CD8-positive, alpha-beta T cell (primary cell): ENCODE measurements at regions of chr6 and their contacts with region 1.

Region 1: DNA sequence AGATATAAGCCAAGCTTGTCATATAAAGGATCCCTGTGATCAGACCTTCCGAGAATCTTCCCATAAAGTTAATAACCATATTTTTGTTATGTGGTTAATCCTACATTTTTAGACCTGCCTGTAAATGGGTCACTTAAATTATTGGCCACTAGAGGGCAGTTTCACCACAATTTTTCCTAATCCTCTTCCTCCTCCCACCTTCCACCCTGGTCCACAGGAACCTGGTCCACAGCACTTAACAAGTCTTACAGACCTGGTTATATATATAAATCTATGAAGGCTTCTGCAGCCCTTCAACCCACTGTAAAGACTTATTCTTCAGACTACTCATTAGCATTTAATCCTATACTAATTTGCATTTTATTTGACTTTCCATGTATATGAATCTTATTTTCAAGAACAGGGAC is 28.3 kb downstream of the MRS2 start:
- DNase-seq: peak in 3 of 9 experiments; percentile 17 to 62 (median 52)
- ATAC-seq: no peak
- H3K4me3 ChIP-seq: no peak overlapping the region
- H3K4me3 Mint-ChIP-seq: no peak overlapping the region
- H3K27ac ChIP-seq: no peak overlapping the region
- H3K27ac Mint-ChIP-seq: no peak overlapping the region
- H3K4me1 ChIP-seq: no peaks in the 10 kb centered on the region
- H3K4me1 Mint-ChIP-seq: no peaks in the 10 kb centered on the region
- H3K27me3 ChIP-seq: no peaks in the 10 kb centered on the region
- H3K27me3 Mint-ChIP-seq: no peaks in the 10 kb centered on the region
- CTCF ChIP-seq: peak; percentile 64

Region 2: GRCh38 chr6:24520929-24521546 is 90.0 kb after region 1 on chr6:
- CTCF ChIA-PET with region 1: interaction called, 16 read pairs
- POLR2A ChIA-PET with region 1: no interaction called
- intact Hi-C with region 1: loop called (anchors 1 to 5 kb)
- DNase-seq: peak in 7 of 9 experiments; percentile 2 to 43 (median 26)
- ATAC-seq: peak; percentile 56
- H3K4me3 ChIP-seq: no peak overlapping the region
- H3K4me3 Mint-ChIP-seq: no peak overlapping the region
- H3K27ac ChIP-seq: no peak overlapping the region
- H3K27ac Mint-ChIP-seq: no peak overlapping the region
- H3K4me1 ChIP-seq: no peaks in the 10 kb centered on the region
- H3K4me1 Mint-ChIP-seq: peaks cover 1% of the 10 kb centered on the region
- H3K27me3 ChIP-seq: no peaks in the 10 kb centered on the region
- H3K27me3 Mint-ChIP-seq: no peaks in the 10 kb centered on the region
- CTCF ChIP-seq: no peak

Region 3: GRCh38 chr6:24689964-24690363 is 258.9 kb after region 1 on chr6:
- CTCF ChIA-PET with region 1: interaction called, 7 read pairs
- POLR2A ChIA-PET with region 1: no interaction called
- intact Hi-C with region 1: loop called (anchors 1 to 2 kb)
- DNase-seq: no peak
- ATAC-seq: no peak
- H3K4me3 ChIP-seq: no peak overlapping the region
- H3K4me3 Mint-ChIP-seq: no peak overlapping the region
- H3K27ac ChIP-seq: no peak overlapping the region
- H3K27ac Mint-ChIP-seq: no peak overlapping the region
- H3K4me1 ChIP-seq: peaks cover 10% of the 10 kb centered on the region
- H3K4me1 Mint-ChIP-seq: peaks cover 11% of the 10 kb centered on the region
- H3K27me3 ChIP-seq: no peaks in the 10 kb centered on the region
- H3K27me3 Mint-ChIP-seq: no peaks in the 10 kb centered on the region
- CTCF ChIP-seq: no peak

Region 4: DNA sequence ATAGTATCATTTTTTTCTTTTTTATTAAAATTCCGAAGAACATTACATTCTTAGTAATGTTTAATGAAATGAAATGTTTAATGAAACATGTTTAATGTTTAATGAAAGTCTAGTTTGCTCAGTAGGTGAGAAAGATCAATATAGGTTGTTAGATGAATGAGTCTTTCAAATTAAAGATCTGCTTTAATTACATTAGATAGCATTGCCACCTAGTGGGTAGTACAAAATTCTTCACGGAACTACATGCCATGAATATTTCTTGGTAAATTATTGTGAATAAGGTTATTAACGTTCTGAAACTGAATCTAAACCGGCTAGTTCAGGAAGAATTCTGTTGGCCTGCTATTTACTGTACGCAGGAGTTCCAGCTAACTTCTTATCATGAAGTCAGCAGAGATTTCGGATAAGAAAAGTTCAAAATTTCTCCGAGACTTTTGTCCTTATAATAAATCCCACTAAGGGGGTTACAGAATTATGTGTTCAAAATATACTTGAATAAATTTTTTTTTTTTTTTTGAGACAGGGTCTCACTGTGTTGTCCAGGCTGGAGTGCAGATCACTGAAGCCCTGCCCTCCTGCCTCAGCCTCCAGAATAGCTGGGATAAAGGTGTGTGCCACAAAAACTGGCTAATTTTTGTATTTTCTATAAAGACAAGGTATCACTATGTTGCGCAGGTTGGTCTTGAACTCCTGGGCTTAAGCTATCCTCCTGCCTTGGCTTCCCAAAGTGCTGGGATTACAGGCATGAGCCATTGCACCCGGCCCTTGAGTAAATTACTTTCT is 335.8 kb after region 1 on chr6:
- CTCF ChIA-PET with region 1: no interaction called
- POLR2A ChIA-PET with region 1: no interaction called
- intact Hi-C with region 1: loop called (anchors 5 kb)
- DNase-seq: peak in 2 of 9 experiments; percentile 43 to 58
- ATAC-seq: peak; percentile 73
- H3K4me3 ChIP-seq: no peak overlapping the region
- H3K4me3 Mint-ChIP-seq: no peak overlapping the region
- H3K27ac ChIP-seq: no peak overlapping the region
- H3K27ac Mint-ChIP-seq: no peak overlapping the region
- H3K4me1 ChIP-seq: no peaks in the 10 kb centered on the region
- H3K4me1 Mint-ChIP-seq: peaks cover 4% of the 10 kb centered on the region
- H3K27me3 ChIP-seq: no peaks in the 10 kb centered on the region
- H3K27me3 Mint-ChIP-seq: no peaks in the 10 kb centered on the region
- CTCF ChIP-seq: peak; percentile 65

Region 5: DNA sequence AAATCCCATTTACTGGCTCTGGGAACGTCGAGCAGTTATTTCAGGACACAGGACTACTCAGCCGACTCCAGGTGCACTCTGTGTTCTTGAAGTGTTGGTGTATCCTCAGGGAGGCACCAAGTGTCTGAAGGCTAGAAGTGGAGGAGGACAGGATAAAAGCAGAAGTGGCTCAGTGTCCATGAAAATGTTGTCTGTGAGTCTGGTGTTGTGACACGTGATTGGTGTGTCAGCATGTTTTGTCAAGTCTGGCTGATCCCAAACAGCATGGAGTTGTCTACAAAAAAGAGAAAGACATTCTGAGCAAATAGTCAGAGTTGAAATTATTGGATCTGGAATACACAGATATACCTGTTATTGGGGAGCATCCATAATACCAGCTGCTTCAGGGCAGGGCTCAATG is 1251.3 kb after region 1 on chr6:
- CTCF ChIA-PET with region 1: no interaction called
- POLR2A ChIA-PET with region 1: no interaction called
- intact Hi-C with region 1: no loop called
- DNase-seq: no peak
- ATAC-seq: no peak
- H3K4me3 ChIP-seq: no peak overlapping the region
- H3K4me3 Mint-ChIP-seq: no peak overlapping the region
- H3K27ac ChIP-seq: no peak overlapping the region
- H3K27ac Mint-ChIP-seq: no peak overlapping the region
- H3K4me1 ChIP-seq: no peaks in the 10 kb centered on the region
- H3K4me1 Mint-ChIP-seq: no peaks in the 10 kb centered on the region
- H3K27me3 ChIP-seq: peaks cover 0 to 3% of the 10 kb centered on the region in 2 experiments
- H3K27me3 Mint-ChIP-seq: peaks cover 15% of the 10 kb centered on the region
- CTCF ChIP-seq: no peak

Region 6: GRCh38 chr6:26065952-26066380 is 1634.9 kb after region 1 on chr6:
- CTCF ChIA-PET with region 1: no interaction called
- POLR2A ChIA-PET with region 1: no interaction called
- intact Hi-C with region 1: no loop called
- DNase-seq: peak in 7 of 9 experiments; percentile 32 to 86 (median 58)
- ATAC-seq: peak; percentile 95
- H3K4me3 ChIP-seq: no peak overlapping the region
- H3K4me3 Mint-ChIP-seq: no peak overlapping the region
- H3K27ac ChIP-seq: no peak overlapping the region
- H3K27ac Mint-ChIP-seq: no peak overlapping the region
- H3K4me1 ChIP-seq: peaks cover 6% of the 10 kb centered on the region
- H3K4me1 Mint-ChIP-seq: peaks cover 5% of the 10 kb centered on the region
- H3K27me3 ChIP-seq: no peaks in the 10 kb centered on the region
- H3K27me3 Mint-ChIP-seq: peaks cover 1% of the 10 kb centered on the region
- CTCF ChIP-seq: peak; percentile 95